MCF 10A (cell line): ENCODE measurements at regions of chr2 and their contacts with region 1.

Region 1: GRCh38 chr2:41414486-41415230 is 633.2 kb upstream of the PKDCC start:
- DNase-seq: peak; percentile 67
- H3K4me3 Mint-ChIP-seq: no peak overlapping the region
- H3K27ac Mint-ChIP-seq: no peak overlapping the region
- H3K4me1 Mint-ChIP-seq: no peaks in the 10 kb centered on the region
- H3K27me3 Mint-ChIP-seq: no peaks in the 10 kb centered on the region
- CTCF ChIP-seq: peak; percentile 64

Region 2: DNA sequence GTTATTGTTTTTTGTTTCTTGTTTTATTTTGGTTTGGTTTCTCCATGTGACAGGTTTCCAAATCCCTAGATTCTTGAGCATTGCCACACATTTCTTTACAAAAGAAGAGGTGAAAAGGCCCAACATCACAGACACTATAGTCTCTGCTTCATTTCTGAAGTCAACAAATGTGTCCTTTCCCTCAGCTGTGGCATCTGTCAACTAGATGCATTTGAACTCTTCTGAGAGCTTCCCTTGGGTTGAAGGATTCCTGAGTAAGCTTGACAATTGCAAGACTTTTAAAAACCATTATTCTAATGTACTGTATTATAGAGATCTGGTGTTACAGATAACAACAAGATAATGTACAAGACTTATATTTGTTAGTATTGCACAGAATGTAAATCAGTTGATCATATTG is 70.1 kb before region 1 on chr2:
- CTCF ChIA-PET with region 1: no interaction called
- POLR2A ChIA-PET with region 1: no interaction called
- intact Hi-C with region 1: no loop called
- DNase-seq: no peak
- H3K4me3 Mint-ChIP-seq: no peak overlapping the region
- H3K27ac Mint-ChIP-seq: no peak overlapping the region
- H3K4me1 Mint-ChIP-seq: no peaks in the 10 kb centered on the region
- H3K27me3 Mint-ChIP-seq: peaks cover 85% of the 10 kb centered on the region
- CTCF ChIP-seq: no peak

Region 3: DNA sequence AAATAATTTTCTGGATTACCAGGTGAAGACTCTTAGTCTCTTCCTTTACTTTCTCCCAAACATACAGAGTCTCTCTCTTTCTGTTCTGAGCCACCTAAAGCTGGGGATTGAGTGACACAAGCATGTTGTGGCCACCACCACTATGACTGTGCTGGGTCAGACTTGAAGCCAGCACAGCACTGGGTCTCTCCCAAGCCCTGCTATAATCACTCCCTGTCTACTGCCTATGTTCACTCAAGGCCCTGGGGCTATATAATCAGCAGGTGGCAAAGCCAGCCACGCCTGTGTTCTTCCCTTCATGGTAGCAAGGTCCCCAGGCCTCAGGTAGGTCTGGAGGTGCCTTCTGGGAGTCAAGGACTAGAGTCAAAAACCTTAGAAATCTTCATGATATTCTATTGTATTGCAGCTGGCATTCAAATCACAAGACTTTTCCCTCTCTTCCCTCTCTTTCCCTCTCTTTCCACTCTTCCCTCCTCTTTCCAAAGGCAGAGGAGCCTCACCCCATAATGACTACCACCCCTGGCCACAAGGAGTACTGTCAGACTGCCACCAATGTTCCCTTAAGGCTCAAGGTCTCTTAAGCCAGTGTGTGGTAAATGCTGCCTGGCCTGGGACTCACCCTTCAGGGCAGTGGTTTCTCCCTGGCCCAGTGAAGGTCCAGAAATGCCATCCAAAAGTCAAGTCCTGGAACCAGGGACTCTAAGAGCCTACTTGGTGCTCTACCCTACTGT is 27.1 kb after region 1 on chr2:
- CTCF ChIA-PET with region 1: no interaction called
- POLR2A ChIA-PET with region 1: no interaction called
- intact Hi-C with region 1: no loop called
- DNase-seq: no peak
- H3K4me3 Mint-ChIP-seq: no peak overlapping the region
- H3K27ac Mint-ChIP-seq: no peak overlapping the region
- H3K4me1 Mint-ChIP-seq: no peaks in the 10 kb centered on the region
- H3K27me3 Mint-ChIP-seq: no peaks in the 10 kb centered on the region
- CTCF ChIP-seq: no peak

Region 4: DNA sequence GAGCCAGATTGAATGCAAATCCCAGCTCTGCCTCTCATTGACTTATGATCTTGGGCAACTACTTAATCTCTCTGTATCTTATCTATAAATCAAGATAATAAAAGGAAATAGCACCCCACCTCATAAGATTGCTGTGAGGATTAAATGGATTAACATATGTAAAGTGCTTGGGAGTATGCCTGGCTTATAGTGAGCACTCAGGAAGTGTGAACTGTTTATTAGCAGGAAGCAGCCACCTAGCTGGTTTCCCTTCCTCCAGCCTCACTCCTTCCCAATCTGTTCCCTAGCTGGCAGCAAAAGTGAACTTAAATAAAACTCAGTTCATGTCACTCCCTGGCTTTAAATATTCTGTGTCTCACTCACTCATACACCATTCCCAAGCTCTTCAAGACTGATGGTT is 106.6 kb after region 1 on chr2:
- CTCF ChIA-PET with region 1: no interaction called
- POLR2A ChIA-PET with region 1: no interaction called
- intact Hi-C with region 1: no loop called
- DNase-seq: no peak
- H3K4me3 Mint-ChIP-seq: no peak overlapping the region
- H3K27ac Mint-ChIP-seq: no peak overlapping the region
- H3K4me1 Mint-ChIP-seq: no peaks in the 10 kb centered on the region
- H3K27me3 Mint-ChIP-seq: no peaks in the 10 kb centered on the region
- CTCF ChIP-seq: no peak

Region 5: DNA sequence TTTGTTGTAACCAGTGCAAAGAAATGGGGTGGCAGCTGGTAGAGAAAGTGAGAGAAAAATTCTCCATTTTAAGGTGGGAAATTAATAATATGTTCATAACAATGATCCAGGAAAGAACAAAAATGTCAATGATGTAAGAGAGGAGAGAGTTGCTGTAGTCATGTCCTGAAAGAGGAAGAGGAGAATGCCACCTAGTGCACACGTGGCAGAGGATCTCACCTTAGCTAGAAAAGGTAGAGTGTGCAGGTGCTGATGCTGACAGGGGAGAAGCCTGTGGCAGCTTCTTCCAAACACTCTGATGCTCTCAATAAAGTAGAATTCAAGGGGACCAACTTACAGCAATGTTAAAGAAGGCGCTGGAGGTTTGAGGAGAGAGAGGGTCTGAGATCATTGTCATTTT is 350.3 kb after region 1 on chr2:
- CTCF ChIA-PET with region 1: no interaction called
- POLR2A ChIA-PET with region 1: no interaction called
- intact Hi-C with region 1: loop called (anchors 1 kb)
- DNase-seq: peak; percentile 14
- H3K4me3 Mint-ChIP-seq: no peak overlapping the region
- H3K27ac Mint-ChIP-seq: no peak overlapping the region
- H3K4me1 Mint-ChIP-seq: no peaks in the 10 kb centered on the region
- H3K27me3 Mint-ChIP-seq: peaks cover 2% of the 10 kb centered on the region
- CTCF ChIP-seq: peak; percentile 13